ENCODE measurements at regions of chr6 and their contacts with region 1.

Region 1: DNA sequence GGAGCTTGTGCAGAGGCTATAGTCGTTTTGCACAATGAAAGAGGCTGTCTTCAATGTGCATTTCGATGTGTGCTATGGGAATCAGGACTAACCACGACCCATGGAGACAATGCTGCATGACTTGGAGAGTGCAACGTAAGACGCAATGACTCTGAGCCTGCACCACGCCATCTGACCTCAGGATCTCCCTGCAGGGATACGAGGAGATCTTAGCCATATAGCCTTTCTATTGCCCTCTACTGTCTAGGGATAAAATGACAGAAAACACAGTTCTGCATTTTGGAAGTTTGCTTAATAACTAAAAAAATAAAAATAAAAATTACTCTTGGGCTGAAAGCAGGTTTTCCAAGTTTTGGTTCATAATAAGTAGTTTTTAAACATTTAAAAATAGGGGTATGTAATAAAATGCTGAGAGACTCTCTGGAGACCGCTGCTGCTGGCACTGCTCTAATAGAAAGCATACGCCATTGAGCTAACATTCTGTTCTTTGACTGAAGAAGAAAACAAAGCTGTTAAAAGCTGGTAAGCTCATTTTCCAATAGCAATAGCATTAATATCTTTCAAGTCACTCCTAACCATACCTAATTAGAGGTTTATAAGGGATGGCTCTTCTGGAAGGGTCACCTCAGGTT is 87.2 kb downstream of the PDE7B start:
- DNase-seq: peak; percentile 30 to 36
- ATAC-seq: peak; percentile 80 to 91
- H3K4me3 ChIP-seq: peak overlapping the region; percentile 14 to 55 (median 39)
- H3K27ac ChIP-seq: peak overlapping the region; percentile 53 to 76 (median 62)
- H3K4me1 ChIP-seq: peaks cover 13 to 15% of the 10 kb centered on the region in 2 donors
- H3K27me3 ChIP-seq: no peaks in the 10 kb centered on the region
- CTCF ChIP-seq: peak in 2 of 5 experiments; percentile 50 to 63
- POLR2A ChIP-seq: no peak

Region 2: DNA sequence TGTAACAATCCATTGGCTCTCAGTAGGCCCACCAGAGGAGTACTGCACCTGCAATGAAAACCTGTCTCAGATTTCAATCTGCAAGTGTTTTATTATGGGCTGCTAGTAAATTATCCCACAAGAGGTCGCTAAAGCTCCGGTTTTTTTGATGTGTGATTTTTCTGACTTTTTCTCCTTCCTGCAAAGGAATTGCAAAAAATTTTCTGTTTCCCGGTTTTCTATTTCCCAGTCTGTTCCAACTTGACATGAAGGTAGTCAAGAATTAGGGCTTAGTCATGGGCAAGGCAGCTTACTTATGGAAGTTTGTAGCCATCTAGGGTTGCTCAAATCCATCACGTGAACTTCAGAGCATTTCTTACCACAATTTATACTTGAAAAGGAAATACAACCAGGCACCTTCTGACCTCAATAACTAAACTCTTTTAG is 402.7 kb before region 1 on chr6:
- in situ Hi-C with region 1: loop called (anchors 25 kb)
- intact Hi-C with region 1: loop called (anchors 10 kb)
- DNase-seq: no peak
- ATAC-seq: no peak
- H3K4me3 ChIP-seq: peak overlapping the region in 1 of 4 donors; percentile 12
- H3K27ac ChIP-seq: no peak overlapping the region
- H3K4me1 ChIP-seq: no peaks in the 10 kb centered on the region
- H3K27me3 ChIP-seq: no peaks in the 10 kb centered on the region
- CTCF ChIP-seq: peak; percentile 30 to 68 (median 45)
- POLR2A ChIP-seq: no peak